ENCODE measurements at regions of chr10 and their contacts with region 1.

Region 1: DNA sequence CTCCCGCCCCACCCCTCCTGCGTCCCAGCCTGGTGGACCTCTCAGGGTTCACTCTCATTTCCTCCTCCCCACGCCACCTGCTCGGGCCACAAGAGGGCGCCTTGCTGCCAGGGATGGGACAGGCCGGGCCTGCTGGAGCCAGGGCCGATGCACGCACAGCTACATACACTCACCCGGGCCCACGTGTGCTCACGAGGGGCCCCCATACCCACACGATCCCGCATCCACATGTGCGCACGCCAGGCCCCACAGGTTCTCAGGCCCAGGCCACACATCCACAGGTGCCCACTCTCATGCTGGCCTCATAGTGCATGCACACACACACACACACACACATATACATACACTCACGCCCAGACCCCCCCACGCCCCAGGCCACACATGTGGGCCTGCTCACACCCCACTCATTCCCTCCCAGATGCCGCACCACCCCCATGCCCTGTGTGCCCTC is 68.6 kb downstream of the LHPP start:
- DNase-seq: peak; percentile 86
- H3K4me3 Mint-ChIP-seq: no peak overlapping the region
- H3K27ac Mint-ChIP-seq: no peak overlapping the region
- H3K4me1 Mint-ChIP-seq: peaks cover 13% of the 10 kb centered on the region
- H3K27me3 Mint-ChIP-seq: no peaks in the 10 kb centered on the region
- CTCF ChIP-seq: peak; percentile 91

Region 2: DNA sequence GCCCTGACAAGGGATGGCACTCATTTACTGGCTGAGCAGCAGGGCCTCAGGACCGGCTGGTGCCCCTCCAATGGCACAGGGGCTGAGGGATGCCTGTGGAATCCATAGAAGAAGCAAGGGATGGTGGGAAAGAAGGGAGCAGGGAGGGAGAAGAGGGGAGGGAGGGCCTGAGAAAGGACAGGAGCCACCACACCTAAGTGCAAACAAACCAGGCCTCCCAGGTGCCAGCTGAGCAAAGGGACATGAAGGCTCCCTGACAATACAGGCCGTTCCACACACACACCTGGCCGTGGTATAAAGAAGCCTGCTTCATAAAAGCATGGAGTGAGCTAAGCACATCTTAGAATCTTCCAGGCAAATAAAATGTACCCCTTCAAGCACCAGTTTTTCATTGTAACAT is 165.6 kb before region 1 on chr10:
- CTCF ChIA-PET with region 1: no interaction called
- POLR2A ChIA-PET with region 1: no interaction called
- intact Hi-C with region 1: no loop called
- DNase-seq: no peak
- H3K4me3 Mint-ChIP-seq: no peak overlapping the region
- H3K27ac Mint-ChIP-seq: no peak overlapping the region
- H3K4me1 Mint-ChIP-seq: no peaks in the 10 kb centered on the region
- H3K27me3 Mint-ChIP-seq: no peaks in the 10 kb centered on the region
- CTCF ChIP-seq: no peak

Region 3: GRCh38 chr10:124762281-124762680 is 232.0 kb after region 1 on chr10:
- CTCF ChIA-PET with region 1: interaction called, 10 read pairs
- POLR2A ChIA-PET with region 1: no interaction called
- intact Hi-C with region 1: no loop called
- DNase-seq: no peak
- H3K4me3 Mint-ChIP-seq: no peak overlapping the region
- H3K27ac Mint-ChIP-seq: no peak overlapping the region
- H3K4me1 Mint-ChIP-seq: no peaks in the 10 kb centered on the region
- H3K27me3 Mint-ChIP-seq: no peaks in the 10 kb centered on the region
- CTCF ChIP-seq: no peak

Region 4: GRCh38 chr10:124791378-124792348 is 261.4 kb after region 1 on chr10 and contains the start of gene EEF1AKMT2:
- CTCF ChIA-PET with region 1: interaction called, 3 read pairs
- POLR2A ChIA-PET with region 1: no interaction called
- intact Hi-C with region 1: loop called (anchors 1 kb)
- DNase-seq: peak; percentile 85
- H3K4me3 Mint-ChIP-seq: peak within 1 kb of the TSS; percentile 95
- H3K27ac Mint-ChIP-seq: peak within 1 kb of the TSS; percentile 99
- H3K4me1 Mint-ChIP-seq: peaks cover 8% of the 10 kb centered on the region
- H3K27me3 Mint-ChIP-seq: no peaks in the 10 kb centered on the region
- CTCF ChIP-seq: peak; percentile 29
- total RNA-seq, gene EEF1AKMT2: 17.5 and 18.6 TPM in 2 replicates

Region 5: GRCh38 chr10:124827474-124827873 is 297.2 kb after region 1 on chr10:
- CTCF ChIA-PET with region 1: interaction called, 11 read pairs
- POLR2A ChIA-PET with region 1: interaction called, 3 read pairs
- intact Hi-C with region 1: loop called (anchors 1 kb)
- DNase-seq: peak; percentile 30
- H3K4me3 Mint-ChIP-seq: no peak overlapping the region
- H3K27ac Mint-ChIP-seq: no peak overlapping the region
- H3K4me1 Mint-ChIP-seq: no peaks in the 10 kb centered on the region
- H3K27me3 Mint-ChIP-seq: no peaks in the 10 kb centered on the region
- CTCF ChIP-seq: peak; percentile 46

Region 6: GRCh38 chr10:124916585-124917427 is 386.6 kb after region 1 on chr10:
- CTCF ChIA-PET with region 1: no interaction called
- POLR2A ChIA-PET with region 1: no interaction called
- intact Hi-C with region 1: loop called (anchors 5 kb)
- DNase-seq: peak; percentile 96
- H3K4me3 Mint-ChIP-seq: peak overlapping the region; percentile 91
- H3K27ac Mint-ChIP-seq: peak overlapping the region; percentile 80
- H3K4me1 Mint-ChIP-seq: peaks cover 21% of the 10 kb centered on the region
- H3K27me3 Mint-ChIP-seq: no peaks in the 10 kb centered on the region
- CTCF ChIP-seq: no peak

Measured in MCF 10A (cell line).